ENCODE measurements at regions of chr21 and their contacts with region 1.

Region 1: GRCh38 chr21:45140346-45140940 is 66.1 kb downstream of the ADARB1 start:
- DNase-seq: peak; percentile 70
- H3K4me3 ChIP-seq: no peak overlapping the region
- H3K27ac ChIP-seq: no peak overlapping the region
- H3K4me1 ChIP-seq: peaks cover 12% of the 10 kb centered on the region
- H3K27me3 ChIP-seq: no peaks in the 10 kb centered on the region
- CTCF ChIP-seq: peak; percentile 73 to 95

Region 2: DNA sequence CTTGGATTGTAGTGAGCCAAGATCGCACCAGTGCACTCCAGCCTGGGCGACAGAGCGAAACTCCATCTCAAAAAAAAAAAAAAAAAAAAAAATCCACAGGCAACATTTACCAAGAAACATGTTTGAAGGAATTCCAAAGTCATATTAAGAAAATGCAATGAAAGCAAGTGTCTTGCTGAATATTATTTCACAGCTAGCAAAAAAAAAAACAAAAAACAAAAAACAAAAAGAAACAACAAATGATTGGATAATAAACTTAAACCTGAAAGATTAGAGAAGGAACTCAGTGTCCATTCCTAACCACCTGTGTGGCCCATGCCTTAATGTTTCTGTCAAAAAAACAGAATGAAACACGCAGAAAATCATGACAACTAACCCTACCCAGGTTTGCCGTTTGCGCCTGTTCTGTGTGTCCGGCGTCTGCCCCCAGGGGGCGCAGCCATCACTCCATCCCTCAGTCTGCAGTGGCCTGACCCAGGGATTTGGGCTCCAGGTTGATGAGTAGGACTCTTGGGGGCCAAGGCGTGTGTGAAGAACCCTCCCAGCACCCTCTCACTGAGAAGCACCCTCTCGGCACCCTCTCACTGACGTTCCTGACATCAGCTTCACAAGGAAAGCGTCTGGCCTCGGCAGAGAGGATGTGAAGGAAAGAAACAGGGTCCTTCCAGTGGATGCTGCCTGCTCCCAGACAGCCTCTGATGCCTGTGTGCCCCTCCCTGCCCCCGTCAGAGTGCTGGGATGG is 247.7 kb before region 1 on chr21:
- CTCF ChIA-PET with region 1: interaction called, 3 read pairs
- dilution Hi-C with region 1: no loop called
- in situ Hi-C with region 1: no loop called
- intact Hi-C with region 1: loop called (anchors 2 kb)
- DNase-seq: peak; percentile 40
- H3K4me3 ChIP-seq: no peak overlapping the region
- H3K27ac ChIP-seq: no peak overlapping the region
- H3K4me1 ChIP-seq: peaks cover 10% of the 10 kb centered on the region
- H3K27me3 ChIP-seq: no peaks in the 10 kb centered on the region
- CTCF ChIP-seq: peak; percentile 91 to 95

Region 3: GRCh38 chr21:44949779-44950198 is 190.7 kb before region 1 on chr21:
- CTCF ChIA-PET with region 1: interaction called, 15 read pairs
- dilution Hi-C with region 1: no loop called
- in situ Hi-C with region 1: loop called in 1 of 2 experiments (anchors 5 kb)
- intact Hi-C with region 1: loop called (anchors 1 kb)
- DNase-seq: peak; percentile 70
- H3K4me3 ChIP-seq: no peak overlapping the region
- H3K27ac ChIP-seq: no peak overlapping the region
- H3K4me1 ChIP-seq: peaks cover 10% of the 10 kb centered on the region
- H3K27me3 ChIP-seq: no peaks in the 10 kb centered on the region
- CTCF ChIP-seq: peak; percentile 87 to 94

Region 4: DNA sequence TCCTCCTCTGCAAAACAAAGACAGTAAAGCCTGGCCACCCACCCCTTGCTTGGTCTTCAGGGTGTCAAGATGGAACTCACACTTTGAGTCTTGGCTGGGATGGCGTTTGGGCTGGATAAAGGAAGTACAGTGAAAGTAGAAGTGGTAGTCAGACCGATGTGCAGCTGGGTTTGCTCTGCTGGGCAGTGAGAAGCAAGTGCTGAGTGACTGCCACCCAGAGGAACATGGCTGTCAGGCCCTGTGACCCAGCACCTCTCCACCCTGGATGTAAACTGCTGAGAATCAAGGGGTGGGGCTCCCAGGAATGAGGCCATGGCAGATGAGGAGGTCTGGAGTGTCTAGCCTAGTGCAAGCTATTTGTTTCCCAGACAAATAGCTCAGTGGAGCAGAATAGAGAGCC is 96.0 kb after region 1 on chr21:
- CTCF ChIA-PET with region 1: no interaction called
- dilution Hi-C with region 1: loop called (anchors 5 kb)
- in situ Hi-C with region 1: no loop called
- intact Hi-C with region 1: loop called (anchors 1 kb)
- DNase-seq: no peak
- H3K4me3 ChIP-seq: no peak overlapping the region
- H3K27ac ChIP-seq: no peak overlapping the region
- H3K4me1 ChIP-seq: no peaks in the 10 kb centered on the region
- H3K27me3 ChIP-seq: peaks cover 16% of the 10 kb centered on the region
- CTCF ChIP-seq: peak in 1 of 2 donors; percentile 19

Region 5: GRCh38 chr21:45439161-45439872 is 298.9 kb after region 1 on chr21:
- CTCF ChIA-PET with region 1: no interaction called
- dilution Hi-C with region 1: no loop called
- in situ Hi-C with region 1: loop called (anchors 10 kb)
- intact Hi-C with region 1: loop called (anchors 1 kb)
- DNase-seq: peak; percentile 59
- H3K4me3 ChIP-seq: peak overlapping the region in 2 of 3 experiments; percentile 20 to 30
- H3K27ac ChIP-seq: no peak overlapping the region
- H3K4me1 ChIP-seq: peaks cover 7% of the 10 kb centered on the region
- H3K27me3 ChIP-seq: no peaks in the 10 kb centered on the region
- CTCF ChIP-seq: peak; percentile 79 to 96

Region 6: GRCh38 chr21:45923146-45923545 is 782.7 kb after region 1 on chr21:
- CTCF ChIA-PET with region 1: no interaction called
- dilution Hi-C with region 1: no loop called
- in situ Hi-C with region 1: no loop called
- intact Hi-C with region 1: loop called (anchors 2 kb)
- DNase-seq: peak; percentile 44
- H3K4me3 ChIP-seq: no peak overlapping the region
- H3K27ac ChIP-seq: no peak overlapping the region
- H3K4me1 ChIP-seq: no peaks in the 10 kb centered on the region
- H3K27me3 ChIP-seq: no peaks in the 10 kb centered on the region
- CTCF ChIP-seq: peak; percentile 96 to 99

Measured in mammary epithelial cell (primary cell).